Heart left ventricle (tissue), 16 donors: ENCODE measurements at regions of chr1 and their contacts with region 1.

Region 1: GRCh38 chr1:78855258-78855657 is 151.3 kb downstream of the ADGRL4 start:
- DNase-seq: no peak
- ATAC-seq: no peak
- H3K4me3 ChIP-seq: no peak overlapping the region
- H3K27ac ChIP-seq: no peak overlapping the region
- H3K4me1 ChIP-seq: no peaks in the 10 kb centered on the region
- H3K27me3 ChIP-seq: no peaks in the 10 kb centered on the region
- CTCF ChIP-seq: no peak
- POLR2A ChIP-seq: no peak

Region 2: GRCh38 chr1:78911956-78912880 is 57.0 kb after region 1 on chr1:
- intact Hi-C with region 1: loop called in 1 of 10 experiments (anchors 10 kb)
- DNase-seq: no peak
- ATAC-seq: no peak
- H3K4me3 ChIP-seq: no peak overlapping the region
- H3K27ac ChIP-seq: no peak overlapping the region
- H3K4me1 ChIP-seq: no peaks in the 10 kb centered on the region
- H3K27me3 ChIP-seq: no peaks in the 10 kb centered on the region
- CTCF ChIP-seq: no peak
- POLR2A ChIP-seq: no peak